ENCODE measurements at regions of chr15 and their contacts with region 1.

Region 1: GRCh38 chr15:58880320-58880719 is 53.2 kb downstream of the SLTM start:
- DNase-seq: no peak
- ATAC-seq: no peak
- H3K4me3 ChIP-seq: no peak overlapping the region
- H3K27ac ChIP-seq: no peak overlapping the region
- H3K4me1 ChIP-seq: no peaks in the 10 kb centered on the region
- H3K27me3 ChIP-seq: no peaks in the 10 kb centered on the region
- CTCF ChIP-seq: no peak

Region 2: GRCh38 chr15:59099162-59099685 is 218.9 kb after region 1 on chr15:
- intact Hi-C with region 1: loop called in 1 of 2 experiments (anchors 10 kb)
- DNase-seq: no peak
- ATAC-seq: no peak
- H3K4me3 ChIP-seq: no peak overlapping the region
- H3K27ac ChIP-seq: no peak overlapping the region
- H3K4me1 ChIP-seq: no peaks in the 10 kb centered on the region
- H3K27me3 ChIP-seq: no peaks in the 10 kb centered on the region
- CTCF ChIP-seq: no peak

Measured in psoas muscle (tissue), 8 donors.